Activated CD4-positive, alpha-beta T cell treated with anti-CD3 and anti-CD28 coated beads for 36 hours (primary cell): ENCODE measurements at regions of chr17 and their contacts with region 1.

Region 1: GRCh38 chr17:7435221-7435675 is at the start of gene TMEM102:
- DNase-seq: peak; percentile 99
- ATAC-seq: peak; percentile 84
- H3K4me3 Mint-ChIP-seq: peak within 1 kb of the TSS; percentile 92
- H3K27ac Mint-ChIP-seq: peak within 1 kb of the TSS; percentile 92
- H3K4me1 Mint-ChIP-seq: peaks cover 33% of the 10 kb centered on the region
- H3K27me3 Mint-ChIP-seq: peaks cover 11% of the 10 kb centered on the region
- total RNA-seq, gene TMEM102: 8.7 to 10.7 TPM

Region 2: DNA sequence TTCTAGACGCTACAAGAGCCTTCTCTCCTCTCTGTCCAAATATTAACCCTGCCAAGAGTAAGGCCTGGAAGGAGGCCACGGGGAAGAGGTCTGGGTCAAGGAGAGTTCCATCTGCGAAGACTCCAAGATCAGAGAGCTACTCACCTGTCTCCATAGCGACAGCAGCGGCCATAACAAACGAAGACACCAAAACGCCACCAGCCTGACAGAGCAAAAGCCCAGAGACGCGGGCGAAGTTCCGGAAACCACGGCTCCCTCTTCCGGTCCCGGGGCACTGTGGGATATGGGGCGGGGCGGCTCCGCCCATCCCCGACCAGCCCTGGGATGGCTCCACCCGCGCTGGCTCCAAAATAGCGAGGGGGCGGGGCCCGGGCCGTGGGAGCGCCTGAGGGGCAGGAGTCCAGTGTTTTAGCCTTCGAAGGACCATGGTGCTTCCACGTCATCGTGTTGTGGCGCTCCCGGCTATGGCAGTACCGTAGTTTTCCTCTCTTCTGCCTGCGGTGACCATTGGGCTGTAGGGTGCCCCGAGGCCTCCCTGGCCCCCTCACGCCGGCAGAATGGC is 783.8 kb before region 1 on chr17 and contains the starts of genes C17orf100 and MED31:
- CTCF ChIA-PET with region 1: no interaction called
- POLR2A ChIA-PET with region 1: no interaction called
- intact Hi-C with region 1: loop called in 1 of 2 experiments (anchors 5 kb)
- DNase-seq: peak; percentile 97
- ATAC-seq: peak; percentile 95
- H3K4me3 Mint-ChIP-seq: peak within 1 kb of the TSS; percentile 98
- H3K27ac Mint-ChIP-seq: peak within 1 kb of the TSS; percentile 99
- H3K4me1 Mint-ChIP-seq: peaks cover 55% of the 10 kb centered on the region
- H3K27me3 Mint-ChIP-seq: peaks cover 2% of the 10 kb centered on the region
- total RNA-seq, gene C17orf100: 1.6 to 2.0 TPM
- total RNA-seq, gene MED31: 17.7 to 24.5 TPM

Region 3: DNA sequence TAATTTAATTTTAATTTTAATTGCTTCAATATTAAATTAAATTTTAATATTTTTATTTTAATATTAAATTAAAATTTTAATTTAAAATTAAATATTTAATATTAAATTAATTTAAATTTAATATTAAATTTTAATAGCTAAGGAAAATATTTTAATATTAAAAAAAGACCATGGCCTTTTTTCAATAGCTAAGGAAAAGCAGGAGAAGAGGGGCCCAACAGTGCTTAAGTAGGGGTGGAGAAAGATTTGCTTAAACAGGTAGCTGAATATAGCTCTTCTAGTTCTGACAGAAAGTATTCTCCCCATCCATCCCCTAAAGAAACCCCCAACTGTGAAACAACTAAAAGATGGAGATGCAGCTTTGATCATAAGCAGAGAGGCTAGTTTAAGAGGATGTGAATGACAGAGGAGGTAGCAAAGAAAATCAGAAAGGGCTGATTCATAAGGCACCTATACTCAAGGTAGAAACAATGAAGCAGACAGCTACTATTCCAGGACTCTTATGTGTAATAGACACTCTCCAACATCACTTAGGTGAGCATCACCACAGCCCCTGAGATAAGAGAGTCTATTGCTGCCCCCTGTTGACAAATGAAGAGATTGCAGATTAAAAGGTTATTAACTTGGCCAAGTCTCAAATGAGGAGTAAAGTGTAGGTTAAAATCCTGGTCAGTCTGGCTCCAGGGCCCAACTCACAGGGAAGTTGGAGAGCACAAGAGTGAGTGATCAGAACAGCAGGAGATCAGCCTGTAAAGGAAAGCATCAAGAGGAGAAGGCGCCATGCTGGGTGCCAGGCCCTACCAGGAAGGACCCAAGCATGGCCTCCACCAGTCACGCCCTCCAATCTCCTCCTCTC is 430.6 kb before region 1 on chr17:
- CTCF ChIA-PET with region 1: no interaction called
- POLR2A ChIA-PET with region 1: no interaction called
- intact Hi-C with region 1: no loop called
- DNase-seq: peak; percentile 37
- ATAC-seq: peak; percentile 99
- H3K4me3 Mint-ChIP-seq: no peak overlapping the region
- H3K27ac Mint-ChIP-seq: no peak overlapping the region
- H3K4me1 Mint-ChIP-seq: peaks cover 20% of the 10 kb centered on the region
- H3K27me3 Mint-ChIP-seq: no peaks in the 10 kb centered on the region

Region 4: DNA sequence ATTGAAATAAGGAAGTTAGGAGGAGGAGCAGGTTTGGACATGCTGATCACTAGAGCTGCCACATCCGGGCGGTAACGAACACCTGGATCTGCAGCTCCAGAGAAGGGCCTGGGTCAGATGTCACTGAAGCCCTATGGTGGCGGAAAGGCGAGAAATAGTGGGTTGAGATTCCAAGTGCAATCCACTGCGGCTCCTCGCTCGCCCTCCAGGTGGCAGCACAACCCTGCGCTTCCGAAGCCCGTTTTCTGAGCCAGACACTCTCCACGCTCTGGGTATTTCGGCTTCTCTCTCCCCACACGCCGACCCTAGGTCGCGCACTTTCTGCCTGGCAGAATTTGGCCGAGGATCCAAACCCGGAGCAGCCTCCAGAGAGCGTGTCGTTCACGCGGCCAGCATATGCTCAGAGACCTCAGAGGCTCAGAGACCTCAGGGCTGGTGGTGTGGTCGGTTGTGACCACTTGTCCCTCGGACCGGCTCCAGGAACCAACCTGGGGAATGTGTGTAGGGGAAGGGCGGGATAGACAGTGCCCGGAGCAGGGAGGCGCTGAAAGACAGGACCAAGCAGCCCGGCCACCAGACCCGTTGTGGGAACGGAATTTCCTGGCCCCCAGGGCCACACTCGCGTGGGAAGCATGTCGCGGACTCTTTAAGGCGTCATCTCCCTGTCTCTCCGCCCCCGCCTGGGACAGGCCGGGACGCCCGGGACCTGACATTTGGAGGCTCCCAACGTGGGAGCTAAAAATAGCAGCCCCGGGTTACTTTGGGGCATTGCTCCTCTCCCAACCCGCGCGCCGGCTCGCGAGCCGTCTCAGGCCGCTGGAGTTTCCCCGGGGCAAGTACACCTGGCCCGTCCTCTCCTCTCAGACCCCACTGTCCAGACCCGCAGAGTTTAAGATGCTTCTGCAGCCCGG is 154.5 kb before region 1 on chr17:
- CTCF ChIA-PET with region 1: interaction called, 3 read pairs
- POLR2A ChIA-PET with region 1: no interaction called
- intact Hi-C with region 1: loop called (anchors 1 to 2 kb)
- DNase-seq: peak; percentile 92
- ATAC-seq: peak; percentile 84
- H3K4me3 Mint-ChIP-seq: peak overlapping the region; percentile 70
- H3K27ac Mint-ChIP-seq: no peak overlapping the region
- H3K4me1 Mint-ChIP-seq: peaks cover 21% of the 10 kb centered on the region
- H3K27me3 Mint-ChIP-seq: peaks cover 17% of the 10 kb centered on the region

Region 5: GRCh38 chr17:7351665-7352501 is 83.4 kb before region 1 on chr17 and contains the start of gene KCTD11:
- CTCF ChIA-PET with region 1: interaction called, 27 read pairs
- POLR2A ChIA-PET with region 1: interaction called, 3 read pairs
- intact Hi-C with region 1: loop called (anchors 1 to 2 kb)
- DNase-seq: peak; percentile 90
- ATAC-seq: peak; percentile 58
- H3K4me3 Mint-ChIP-seq: peak within 1 kb of the TSS; percentile 79
- H3K27ac Mint-ChIP-seq: peak within 1 kb of the TSS; percentile 84
- H3K4me1 Mint-ChIP-seq: peaks cover 55% of the 10 kb centered on the region
- H3K27me3 Mint-ChIP-seq: no peaks in the 10 kb centered on the region
- total RNA-seq, gene KCTD11: 5.0 to 6.1 TPM

Region 6: DNA sequence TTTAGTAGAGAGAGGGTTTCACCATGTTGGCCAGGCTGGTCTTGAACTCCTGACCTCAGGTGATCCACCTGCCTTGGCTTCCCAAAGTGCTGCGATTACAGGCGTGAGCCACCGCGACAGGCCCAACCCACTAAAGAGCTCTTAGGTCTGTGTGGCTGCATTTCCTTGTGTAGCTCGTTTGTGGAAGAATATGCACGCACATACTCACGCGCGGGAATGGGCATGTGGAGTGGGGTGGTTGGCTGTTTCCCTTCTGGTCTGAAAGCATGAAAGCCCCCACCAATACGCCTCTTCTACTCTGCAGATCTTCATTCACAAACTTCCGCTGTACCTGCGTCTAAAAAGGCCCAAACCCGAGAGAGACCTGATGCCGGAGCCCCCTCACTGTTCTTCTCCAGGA is 19.7 kb after region 1 on chr17:
- CTCF ChIA-PET with region 1: interaction called, 21 read pairs
- POLR2A ChIA-PET with region 1: interaction called, 4 read pairs
- intact Hi-C with region 1: loop called (anchors 1 kb)
- DNase-seq: no peak
- ATAC-seq: no peak
- H3K4me3 Mint-ChIP-seq: peak overlapping the region; percentile 96
- H3K27ac Mint-ChIP-seq: peak overlapping the region; percentile 93
- H3K4me1 Mint-ChIP-seq: peaks cover 19% of the 10 kb centered on the region
- H3K27me3 Mint-ChIP-seq: no peaks in the 10 kb centered on the region

Region 7: GRCh38 chr17:7614422-7615264 is 179.4 kb after region 1 on chr17 and contains the start of gene FXR2:
- CTCF ChIA-PET with region 1: interaction called, 3 read pairs
- POLR2A ChIA-PET with region 1: interaction called, 4 read pairs
- intact Hi-C with region 1: loop called in 1 of 2 experiments (anchors 1 kb)
- DNase-seq: peak; percentile 100
- ATAC-seq: peak; percentile 95
- H3K4me3 Mint-ChIP-seq: peak within 1 kb of the TSS; percentile 85
- H3K27ac Mint-ChIP-seq: peak within 1 kb of the TSS; percentile 93
- H3K4me1 Mint-ChIP-seq: peaks cover 32% of the 10 kb centered on the region
- H3K27me3 Mint-ChIP-seq: no peaks in the 10 kb centered on the region
- total RNA-seq, gene FXR2: 35.6 to 50.2 TPM